CD14-positive monocyte (primary cell): ENCODE measurements at regions of chr2 and their contacts with region 1.

Region 1: DNA sequence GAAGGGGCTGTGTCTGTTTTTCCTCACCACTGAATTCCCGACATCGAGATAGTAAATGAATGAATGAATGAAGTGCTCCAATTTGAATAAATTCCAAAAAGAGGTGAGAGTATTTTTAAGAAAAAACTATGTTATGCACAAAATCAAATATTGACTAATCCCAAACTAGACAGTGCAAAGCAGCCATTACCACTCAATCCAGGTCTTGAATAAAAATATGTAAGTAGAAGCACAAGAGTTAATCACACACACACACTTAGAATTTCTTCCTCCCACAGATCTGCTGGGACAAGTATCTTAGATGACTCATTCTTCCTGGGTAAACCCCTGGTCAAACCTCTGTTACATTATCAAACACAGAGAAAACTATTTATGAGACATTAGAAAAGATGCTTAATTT is 102.0 kb downstream of the PLA2R1 start:
- DNase-seq: peak; percentile 37 to 74 (median 42)
- H3K4me3 ChIP-seq: no peak overlapping the region
- H3K4me3 Mint-ChIP-seq: no peak overlapping the region
- H3K27ac ChIP-seq: no peak overlapping the region
- H3K27ac Mint-ChIP-seq: no peak overlapping the region
- H3K4me1 ChIP-seq: peaks cover 21 to 28% of the 10 kb centered on the region in 2 donors
- H3K4me1 Mint-ChIP-seq: peaks cover 33% of the 10 kb centered on the region
- H3K27me3 ChIP-seq: no peaks in the 10 kb centered on the region
- H3K27me3 Mint-ChIP-seq: peaks cover 0 to 2% (median 0%) of the 10 kb centered on the region in 3 donors
- CTCF ChIP-seq: no peak

Region 2: DNA sequence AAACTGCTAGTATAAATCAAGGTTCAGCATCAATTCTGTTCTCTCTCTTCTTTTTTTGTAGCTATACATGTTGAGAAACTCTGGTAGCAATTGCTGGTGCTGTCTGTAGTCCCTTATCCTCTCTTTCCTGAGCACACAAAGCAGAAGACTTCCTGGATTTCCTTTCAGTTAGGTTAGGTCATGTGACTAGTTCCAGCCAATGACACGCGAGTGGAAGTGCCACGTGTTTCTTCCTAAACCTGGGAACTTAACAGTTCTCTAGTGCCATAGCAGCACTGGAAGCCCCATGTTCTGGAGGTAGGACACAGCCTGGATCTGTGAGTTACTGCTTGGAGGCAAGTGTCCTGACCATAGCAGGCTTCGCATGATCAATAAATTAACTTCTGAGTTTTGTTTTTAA is 23.9 kb before region 1 on chr2:
- intact Hi-C with region 1: loop called in 1 of 2 experiments (anchors 2 kb)
- DNase-seq: peak in 1 of 3 donors; percentile 13
- H3K4me3 ChIP-seq: no peak overlapping the region
- H3K4me3 Mint-ChIP-seq: no peak overlapping the region
- H3K27ac ChIP-seq: no peak overlapping the region
- H3K27ac Mint-ChIP-seq: peak overlapping the region in 1 of 7 donors; percentile 46
- H3K4me1 ChIP-seq: peaks cover 24 to 31% of the 10 kb centered on the region in 2 donors
- H3K4me1 Mint-ChIP-seq: peaks cover 29% of the 10 kb centered on the region
- H3K27me3 ChIP-seq: no peaks in the 10 kb centered on the region
- H3K27me3 Mint-ChIP-seq: no peaks in the 10 kb centered on the region
- CTCF ChIP-seq: no peak

Region 3: GRCh38 chr2:160085662-160086061 is 125.3 kb after region 1 on chr2:
- intact Hi-C with region 1: no loop called
- DNase-seq: no peak
- H3K4me3 ChIP-seq: no peak overlapping the region
- H3K4me3 Mint-ChIP-seq: no peak overlapping the region
- H3K27ac ChIP-seq: no peak overlapping the region
- H3K27ac Mint-ChIP-seq: no peak overlapping the region
- H3K4me1 ChIP-seq: no peaks in the 10 kb centered on the region
- H3K4me1 Mint-ChIP-seq: no peaks in the 10 kb centered on the region
- H3K27me3 ChIP-seq: no peaks in the 10 kb centered on the region
- H3K27me3 Mint-ChIP-seq: no peaks in the 10 kb centered on the region
- CTCF ChIP-seq: peak; percentile 34

Region 4: GRCh38 chr2:160175169-160176134 is 215.1 kb after region 1 on chr2:
- intact Hi-C with region 1: no loop called
- DNase-seq: no peak
- H3K4me3 ChIP-seq: no peak overlapping the region
- H3K4me3 Mint-ChIP-seq: no peak overlapping the region
- H3K27ac ChIP-seq: no peak overlapping the region
- H3K27ac Mint-ChIP-seq: no peak overlapping the region
- H3K4me1 ChIP-seq: no peaks in the 10 kb centered on the region
- H3K4me1 Mint-ChIP-seq: no peaks in the 10 kb centered on the region
- H3K27me3 ChIP-seq: no peaks in the 10 kb centered on the region
- H3K27me3 Mint-ChIP-seq: peaks cover 0 to 3% (median 2%) of the 10 kb centered on the region in 3 donors
- CTCF ChIP-seq: no peak